ENCODE measurements at regions of chr12 and their contacts with region 1.

Region 1: DNA sequence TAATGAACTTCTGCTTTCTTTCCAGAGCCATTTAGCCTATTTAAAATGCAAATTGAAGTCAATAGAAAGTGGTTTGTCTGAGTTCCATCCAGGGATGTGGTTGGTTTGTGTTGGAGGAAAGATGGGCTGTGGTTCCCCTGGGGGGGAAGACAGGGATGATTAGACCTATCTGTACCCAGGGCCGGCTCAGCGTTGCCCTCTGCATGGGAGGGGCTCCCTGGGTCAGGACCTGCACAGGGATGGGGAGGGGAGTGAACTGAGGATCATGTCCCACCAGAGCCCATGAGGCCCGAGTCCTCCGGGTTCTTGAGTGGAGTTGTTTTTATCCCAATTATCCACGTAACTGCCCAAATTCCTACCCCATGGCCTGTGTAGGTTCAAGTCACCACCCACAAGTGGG is 76.9 kb upstream of the SFSWAP start:
- DNase-seq: no peak
- ATAC-seq: no peak
- H3K4me3 ChIP-seq: no peak overlapping the region
- H3K27ac ChIP-seq: no peak overlapping the region
- H3K4me1 ChIP-seq: no peaks in the 10 kb centered on the region
- H3K27me3 ChIP-seq: peaks cover 67% of the 10 kb centered on the region
- CTCF ChIP-seq: no peak

Region 2: GRCh38 chr12:131333621-131334367 is 300.2 kb before region 1 on chr12:
- CTCF ChIA-PET with region 1: no interaction called
- POLR2A ChIA-PET with region 1: no interaction called
- intact Hi-C with region 1: loop called (anchors 5 kb)
- DNase-seq: no peak
- ATAC-seq: no peak
- H3K4me3 ChIP-seq: no peak overlapping the region
- H3K27ac ChIP-seq: no peak overlapping the region
- H3K4me1 ChIP-seq: no peaks in the 10 kb centered on the region
- H3K27me3 ChIP-seq: peaks cover 32% of the 10 kb centered on the region
- CTCF ChIP-seq: no peak

Region 3: DNA sequence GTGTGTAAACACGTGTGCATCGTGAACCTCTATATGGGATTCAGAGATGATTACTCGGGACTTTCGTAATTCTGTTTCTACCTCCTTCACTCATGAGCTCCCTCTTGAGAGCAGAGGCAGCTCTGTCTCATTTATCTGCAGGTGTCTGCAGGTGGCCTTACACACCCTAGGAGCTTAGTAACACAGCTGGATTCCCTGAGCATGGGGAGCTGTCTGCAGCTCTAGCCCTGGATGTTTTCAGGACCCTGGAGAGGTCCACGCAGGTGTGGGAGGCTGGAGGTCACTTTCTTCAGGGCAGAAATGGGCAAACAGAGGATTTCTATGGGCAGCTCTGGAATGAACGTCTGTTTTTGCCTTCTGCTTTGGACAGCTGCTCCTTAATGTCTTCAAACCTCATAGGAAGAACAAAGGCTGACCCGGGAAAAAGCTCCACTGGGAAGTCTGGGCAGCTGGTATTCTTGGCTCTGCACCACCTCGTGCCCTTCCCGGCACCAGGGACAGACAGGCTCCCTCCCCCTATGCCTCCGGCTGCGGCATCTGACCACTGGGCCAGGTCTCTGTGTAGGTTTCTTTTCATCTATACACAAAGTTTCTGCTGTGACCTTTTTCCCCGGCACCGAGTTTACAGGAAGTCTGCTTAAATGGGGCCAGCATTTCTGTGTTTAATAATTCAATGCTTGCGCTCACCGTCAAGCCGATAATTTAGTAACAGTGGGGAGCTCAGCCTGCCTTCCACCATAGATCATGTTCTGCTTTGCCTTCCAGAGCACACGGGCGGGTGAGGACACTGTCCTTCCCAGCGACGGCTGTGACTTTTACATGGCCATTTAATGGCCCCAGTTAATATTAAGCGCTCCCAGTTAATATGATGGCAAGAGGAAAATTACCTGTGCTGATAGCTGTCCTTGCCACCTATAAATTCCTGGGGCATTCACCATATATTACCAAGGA is 243.4 kb before region 1 on chr12:
- CTCF ChIA-PET with region 1: no interaction called
- POLR2A ChIA-PET with region 1: no interaction called
- intact Hi-C with region 1: no loop called
- DNase-seq: peak; percentile 62
- ATAC-seq: peak; percentile 42; the same call in 1 of the 2 replicates
- H3K4me3 ChIP-seq: no peak overlapping the region
- H3K27ac ChIP-seq: no peak overlapping the region
- H3K4me1 ChIP-seq: no peaks in the 10 kb centered on the region
- H3K27me3 ChIP-seq: peaks cover 26% of the 10 kb centered on the region
- CTCF ChIP-seq: no peak

Region 4: DNA sequence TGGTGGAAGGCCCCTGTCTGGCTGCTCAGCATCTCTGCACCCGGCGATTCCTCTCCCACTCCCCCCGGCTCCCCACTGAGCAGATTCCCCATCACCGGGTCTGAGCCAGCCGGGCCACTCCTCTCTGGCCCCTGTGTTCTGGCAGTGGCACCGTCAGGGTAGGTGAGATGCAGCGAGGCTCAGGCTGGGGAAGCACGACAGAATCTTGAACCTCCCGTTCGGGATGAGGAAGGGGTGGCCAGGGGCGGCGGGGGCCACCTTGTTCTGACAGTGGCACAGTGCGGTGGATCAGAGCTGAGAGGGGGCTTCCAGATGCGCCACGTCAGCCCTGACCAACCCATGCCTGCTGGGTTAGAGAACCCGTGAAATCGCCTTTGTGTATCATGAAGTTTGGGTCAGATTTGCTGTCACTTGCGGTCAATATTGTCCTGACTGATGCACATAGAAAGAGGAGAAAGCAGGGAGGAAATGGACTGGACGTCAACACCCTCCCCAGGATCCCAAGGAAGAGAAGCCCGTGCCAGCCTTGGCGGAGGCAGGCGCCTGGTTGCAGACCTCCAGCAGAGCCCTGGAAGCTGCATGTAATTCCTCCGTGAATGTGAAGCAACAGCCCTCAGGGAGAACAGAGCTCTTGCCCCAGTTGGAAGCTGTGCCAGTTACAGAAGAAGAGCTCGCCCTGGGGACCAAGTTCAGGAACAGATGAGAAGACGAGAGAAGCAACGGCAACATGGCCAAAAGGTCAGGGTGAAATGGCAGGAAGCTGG is 60.2 kb before region 1 on chr12:
- CTCF ChIA-PET with region 1: no interaction called
- POLR2A ChIA-PET with region 1: no interaction called
- intact Hi-C with region 1: no loop called
- DNase-seq: no peak
- ATAC-seq: no peak
- H3K4me3 ChIP-seq: no peak overlapping the region
- H3K27ac ChIP-seq: no peak overlapping the region
- H3K4me1 ChIP-seq: no peaks in the 10 kb centered on the region
- H3K27me3 ChIP-seq: peaks cover 85% of the 10 kb centered on the region
- CTCF ChIP-seq: no peak

Region 5: DNA sequence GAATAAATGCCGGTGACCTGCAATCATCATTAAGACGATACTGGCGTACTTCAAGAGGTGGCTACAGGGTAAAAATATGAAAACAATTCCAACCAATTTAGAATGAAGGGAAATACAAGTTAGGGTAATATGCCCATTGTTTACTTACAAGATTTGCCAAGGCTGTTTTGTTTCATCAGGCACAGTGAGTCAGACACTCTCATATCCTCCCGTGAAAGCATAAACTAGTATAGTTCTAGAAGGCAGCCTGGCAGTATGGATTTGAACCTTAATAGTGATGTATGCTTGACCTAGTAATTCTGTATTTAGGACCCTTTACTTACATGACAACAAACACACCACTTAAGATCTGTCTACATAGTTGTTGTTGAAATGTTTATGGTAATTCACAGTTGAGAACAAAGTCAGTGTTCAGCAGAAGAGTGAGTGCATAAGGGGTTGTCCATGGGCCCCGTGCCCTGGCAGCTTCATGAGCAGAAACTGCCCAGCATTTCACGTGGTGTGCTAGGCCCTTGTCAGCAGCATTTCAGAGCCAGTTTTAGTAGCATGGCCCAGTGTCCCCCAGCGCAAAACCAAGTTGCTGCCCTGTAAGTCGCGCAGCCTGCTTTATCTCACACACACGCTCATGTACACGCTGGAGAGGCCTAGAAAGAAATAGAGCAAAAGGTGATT is 396.5 kb after region 1 on chr12:
- CTCF ChIA-PET with region 1: no interaction called
- POLR2A ChIA-PET with region 1: no interaction called
- intact Hi-C with region 1: no loop called
- DNase-seq: peak; percentile 84
- ATAC-seq: peak; percentile 93
- H3K4me3 ChIP-seq: peak overlapping the region; percentile 6; the same call in 1 of the 2 replicates
- H3K27ac ChIP-seq: peak overlapping the region; percentile 51
- H3K4me1 ChIP-seq: peaks cover 21% of the 10 kb centered on the region
- H3K27me3 ChIP-seq: no peaks in the 10 kb centered on the region
- CTCF ChIP-seq: no peak

Region 6: GRCh38 chr12:132921685-132922084 is 1287.6 kb after region 1 on chr12:
- CTCF ChIA-PET with region 1: no interaction called
- POLR2A ChIA-PET with region 1: no interaction called
- intact Hi-C with region 1: no loop called
- DNase-seq: no peak
- ATAC-seq: no peak
- H3K4me3 ChIP-seq: no peak overlapping the region
- H3K27ac ChIP-seq: no peak overlapping the region
- H3K4me1 ChIP-seq: no peaks in the 10 kb centered on the region
- H3K27me3 ChIP-seq: no peaks in the 10 kb centered on the region
- CTCF ChIP-seq: peak; percentile 49

Measured in PC-3 (cell line).